Activated CD8-positive, alpha-beta T cell treated with anti-CD3 and anti-CD28 coated beads, Interleukin-2, amount 10 ng/mL, durations not matched to agents 7 days and 5 days (primary cell): ENCODE measurements at regions of chrX and their contacts with region 1.

Region 1: DNA sequence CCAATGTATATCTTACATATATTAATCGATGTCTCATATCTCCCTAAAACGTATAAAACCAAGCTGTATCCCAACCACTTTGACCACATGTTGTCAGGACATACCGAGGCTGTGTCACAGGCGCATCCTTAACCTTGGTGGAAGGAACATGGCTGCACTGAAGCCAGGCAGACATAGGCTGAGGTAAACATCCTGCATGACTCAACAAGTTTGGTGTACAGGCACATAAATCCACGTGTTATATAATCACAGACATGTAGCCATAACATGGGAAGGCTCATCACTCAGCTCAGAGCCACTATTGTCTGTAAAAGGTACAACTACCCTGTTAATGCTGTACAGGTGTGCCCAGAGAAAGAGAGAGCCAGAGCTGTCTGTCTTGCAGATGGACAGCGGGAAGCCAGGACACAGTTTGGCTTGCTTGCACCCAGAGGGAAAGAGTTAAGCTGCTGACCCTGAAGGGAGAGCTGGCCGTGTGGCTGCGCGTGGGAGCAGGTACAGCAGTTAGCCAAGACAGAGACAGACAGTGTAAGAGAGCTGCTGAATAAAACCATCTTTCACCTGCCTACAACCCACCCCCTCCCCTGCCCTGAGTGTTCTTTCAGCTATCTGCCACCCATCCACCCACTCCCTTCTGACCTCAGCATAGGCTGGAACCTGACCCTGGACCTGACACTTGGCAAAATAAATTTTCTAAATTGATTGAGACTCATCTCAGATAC is 22.3 kb upstream of the ZBTB33 start:
- DNase-seq: no peak
- ATAC-seq: no peak
- H3K4me3 Mint-ChIP-seq: no peak overlapping the region
- H3K27ac Mint-ChIP-seq: no peak overlapping the region
- H3K4me1 Mint-ChIP-seq: peaks cover 8% of the 10 kb centered on the region
- H3K27me3 Mint-ChIP-seq: no peaks in the 10 kb centered on the region

Region 2: DNA sequence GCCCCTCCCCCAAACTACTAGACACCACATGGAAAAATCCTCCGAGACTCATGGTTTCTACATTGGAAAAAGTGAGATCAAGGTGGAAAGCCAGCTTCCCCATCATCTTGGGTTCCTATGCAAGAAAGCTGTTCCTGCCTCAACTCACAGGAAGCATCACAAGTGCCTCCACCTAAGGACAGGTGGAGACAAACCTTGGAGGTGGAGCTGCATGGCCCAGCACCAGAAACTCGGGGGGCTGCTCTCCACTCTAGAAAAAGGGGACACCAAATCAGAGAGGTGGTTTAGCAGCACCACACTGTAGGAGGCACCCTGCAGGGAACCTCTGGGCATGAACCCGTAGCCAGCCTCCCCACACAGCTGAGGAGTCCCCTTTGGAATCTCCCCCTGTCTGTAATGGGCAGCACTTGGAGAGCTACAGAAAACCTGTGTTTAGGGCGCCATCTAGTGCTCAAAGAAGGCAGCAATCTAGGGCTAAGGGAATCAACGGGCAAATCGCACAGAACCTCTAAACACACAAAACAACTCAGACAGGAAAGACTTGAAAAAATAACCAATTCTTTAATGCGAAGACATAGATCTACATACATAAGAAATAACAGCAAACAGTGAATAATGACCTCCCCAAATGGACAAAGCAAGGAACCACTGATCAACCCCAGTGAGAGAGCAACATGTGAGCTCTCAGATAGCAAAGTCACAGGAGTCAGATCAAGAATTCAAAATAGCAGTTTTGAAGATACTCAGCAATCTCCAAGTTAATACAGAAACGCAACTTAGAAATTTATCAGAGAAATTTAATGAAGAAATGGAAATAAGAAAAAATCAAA is 14.7 kb before region 1 on chrX:
- CTCF ChIA-PET with region 1: interaction called, 23 read pairs
- POLR2A ChIA-PET with region 1: no interaction called
- DNase-seq: peak; percentile 68
- ATAC-seq: peak; percentile 73
- H3K4me3 Mint-ChIP-seq: no peak overlapping the region
- H3K27ac Mint-ChIP-seq: no peak overlapping the region
- H3K4me1 Mint-ChIP-seq: no peaks in the 10 kb centered on the region
- H3K27me3 Mint-ChIP-seq: no peaks in the 10 kb centered on the region

Region 3: GRCh38 chrX:120262859-120263708 is 34.7 kb after region 1 on chrX:
- CTCF ChIA-PET with region 1: no interaction called
- POLR2A ChIA-PET with region 1: no interaction called
- DNase-seq: no peak
- ATAC-seq: no peak
- H3K4me3 Mint-ChIP-seq: no peak overlapping the region
- H3K27ac Mint-ChIP-seq: no peak overlapping the region
- H3K4me1 Mint-ChIP-seq: no peaks in the 10 kb centered on the region
- H3K27me3 Mint-ChIP-seq: no peaks in the 10 kb centered on the region